IMR-90 (cell line): ENCODE measurements at regions of chr3 and their contacts with region 1.

Region 1: DNA sequence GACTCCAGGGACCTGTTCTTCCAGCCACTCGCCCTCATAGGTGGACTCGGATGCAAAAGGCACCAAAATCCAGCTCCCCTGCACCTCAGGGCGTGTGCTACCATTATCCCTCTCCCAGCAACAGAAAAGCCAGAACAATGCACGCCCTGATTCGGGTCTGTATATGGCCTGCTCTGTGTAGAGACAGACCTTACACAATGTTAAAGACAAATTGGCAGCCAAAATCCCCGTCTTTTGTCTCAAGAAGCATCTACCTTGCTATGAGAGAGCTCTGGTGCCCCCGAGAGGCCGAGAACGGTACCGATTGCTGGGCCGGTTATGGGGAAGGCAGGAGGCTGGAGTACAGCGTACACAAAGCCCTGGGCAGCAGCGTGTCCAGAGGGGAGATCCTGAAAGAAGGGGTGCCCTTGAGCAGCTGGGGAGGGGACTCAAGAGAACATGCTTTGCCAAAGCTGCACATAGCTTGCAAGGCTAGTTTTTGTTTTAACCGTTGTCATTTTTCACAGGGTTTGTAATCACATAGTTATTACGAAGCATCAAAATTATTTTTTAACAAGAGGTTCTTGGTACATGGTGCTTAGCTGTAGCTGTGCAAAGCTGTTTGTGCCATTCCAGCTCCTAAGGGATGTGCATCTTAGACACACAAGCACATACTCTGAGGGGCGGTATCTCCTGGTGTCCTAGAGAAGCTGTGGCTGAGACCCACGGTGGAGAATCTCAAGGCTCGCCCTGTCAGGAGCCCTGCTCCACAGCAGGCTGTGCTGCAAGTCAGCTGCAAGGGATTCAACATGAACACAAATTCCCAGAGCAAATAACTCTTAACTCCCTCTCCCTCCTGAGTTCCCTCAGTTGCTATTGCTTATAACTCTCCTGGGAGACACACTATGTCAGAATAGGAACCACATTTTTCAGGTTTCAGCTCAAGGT is 461.5 kb upstream of the PPP2R3A start:
- DNase-seq: peak; percentile 51
- ATAC-seq: peak; percentile 95
- H3K4me3 ChIP-seq: no peak overlapping the region
- H3K27ac ChIP-seq: no peak overlapping the region
- H3K4me1 ChIP-seq: no peaks in the 10 kb centered on the region
- H3K27me3 ChIP-seq: peaks cover 3% of the 10 kb centered on the region; the same call in 1 of the 2 replicates
- CTCF ChIP-seq: peak; percentile 60
- POLR2A ChIP-seq: no peak
- RAD21 ChIP-seq: peak; percentile 70

Region 2: GRCh38 chr3:134794950-134795745 is 708.9 kb before region 1 on chr3 and contains the start of gene EPHB1:
- CTCF ChIA-PET with region 1: interaction called, 8 read pairs
- POLR2A ChIA-PET with region 1: no interaction called
- dilution Hi-C with region 1: no loop called
- in situ Hi-C with region 1: no loop called
- intact Hi-C with region 1: loop called (anchors 1 kb)
- DNase-seq: peak; percentile 87
- ATAC-seq: peak; percentile 93
- H3K4me3 ChIP-seq: peak within 1 kb of the TSS; percentile 47
- H3K27ac ChIP-seq: no peak within 1 kb of the TSS
- H3K4me1 ChIP-seq: peaks cover 1% of the 10 kb centered on the region; the same call in 1 of the 2 replicates
- H3K27me3 ChIP-seq: peaks cover 51% of the 10 kb centered on the region
- CTCF ChIP-seq: peak; percentile 80
- POLR2A ChIP-seq: no peak
- RAD21 ChIP-seq: peak; percentile 83
- total RNA-seq, gene EPHB1: under 0.01 and 0.36 TPM in 2 replicates

Region 3: DNA sequence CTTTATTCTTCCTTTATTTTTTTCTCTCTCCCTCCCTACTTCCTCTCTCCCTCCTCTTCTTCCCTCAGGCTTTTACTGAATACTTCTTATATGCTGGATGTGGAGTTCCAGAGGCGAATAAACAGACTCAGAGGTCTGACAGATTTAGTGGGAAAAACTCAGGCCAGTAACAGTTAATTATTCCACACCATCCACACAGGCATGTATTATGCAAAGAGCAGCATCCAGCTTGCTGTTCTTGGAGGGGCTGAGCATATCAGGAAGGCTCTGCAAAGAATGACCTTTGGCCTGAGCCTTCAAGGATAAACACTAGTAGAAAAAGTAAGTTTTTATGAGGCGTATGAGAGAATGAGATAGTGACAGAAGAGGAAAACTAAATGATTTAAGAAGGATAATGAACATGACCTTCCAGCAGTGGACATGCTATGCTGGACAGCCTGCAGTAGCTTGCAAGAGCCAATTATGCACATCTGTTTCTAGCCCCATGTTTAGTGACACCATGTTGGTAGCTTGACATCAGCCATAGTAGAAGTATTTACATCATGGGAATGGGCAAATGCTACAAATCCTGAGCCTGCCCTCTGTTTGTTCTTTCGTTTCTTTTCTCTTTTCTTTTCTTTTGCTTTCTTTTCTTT is 321.5 kb before region 1 on chr3:
- CTCF ChIA-PET with region 1: no interaction called
- POLR2A ChIA-PET with region 1: no interaction called
- dilution Hi-C with region 1: no loop called
- in situ Hi-C with region 1: no loop called
- intact Hi-C with region 1: no loop called
- DNase-seq: no peak
- ATAC-seq: no peak
- H3K4me3 ChIP-seq: no peak overlapping the region
- H3K27ac ChIP-seq: no peak overlapping the region
- H3K4me1 ChIP-seq: no peaks in the 10 kb centered on the region
- H3K27me3 ChIP-seq: no peaks in the 10 kb centered on the region
- CTCF ChIP-seq: no peak
- POLR2A ChIP-seq: no peak
- RAD21 ChIP-seq: no peak

Region 4: DNA sequence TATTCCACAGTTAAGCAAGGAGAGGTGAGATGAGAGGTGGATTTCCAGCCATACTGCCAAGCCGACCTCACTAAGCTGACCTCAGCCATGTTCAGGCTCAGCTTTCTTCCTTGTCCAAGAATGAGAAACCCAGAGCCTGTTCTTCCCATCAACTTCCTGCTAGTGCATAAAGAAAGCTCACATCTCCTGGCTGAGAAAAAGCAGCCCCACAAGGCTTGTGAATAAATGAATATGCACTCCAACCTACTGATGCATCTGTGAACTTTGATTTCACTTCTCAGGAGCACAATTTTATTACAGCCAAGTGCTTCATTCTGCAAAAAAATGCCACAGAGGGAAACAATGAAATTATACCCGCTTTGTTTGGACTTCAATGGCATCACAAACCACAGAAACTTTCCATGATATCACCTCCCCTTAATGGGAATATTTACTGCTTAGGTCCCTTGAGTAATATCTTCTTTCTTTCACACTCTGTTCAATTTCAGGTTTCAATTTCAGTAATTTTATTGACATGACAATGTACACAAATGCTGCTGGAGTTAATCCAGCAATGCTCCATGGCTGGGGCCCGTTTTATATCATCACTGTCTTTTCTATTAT is 24.5 kb after region 1 on chr3:
- CTCF ChIA-PET with region 1: interaction called, 11 read pairs
- POLR2A ChIA-PET with region 1: no interaction called
- dilution Hi-C with region 1: no loop called
- in situ Hi-C with region 1: no loop called
- intact Hi-C with region 1: no loop called
- DNase-seq: no peak
- ATAC-seq: no peak
- H3K4me3 ChIP-seq: no peak overlapping the region
- H3K27ac ChIP-seq: no peak overlapping the region
- H3K4me1 ChIP-seq: no peaks in the 10 kb centered on the region
- H3K27me3 ChIP-seq: no peaks in the 10 kb centered on the region; the same call in 1 of the 2 replicates
- CTCF ChIP-seq: no peak
- POLR2A ChIP-seq: no peak
- RAD21 ChIP-seq: no peak